Spleen (tissue), 13 donors: ENCODE measurements at regions of chr4 and their contacts with region 1.

Region 1: GRCh38 chr4:109424093-109424841 is 9.3 kb upstream of the SEC24B start:
- DNase-seq: no peak
- H3K4me3 ChIP-seq: no peak overlapping the region
- H3K27ac ChIP-seq: no peak overlapping the region
- H3K4me1 ChIP-seq: peaks cover 0 to 9% (median 3%) of the 10 kb centered on the region in 6 donors
- H3K27me3 ChIP-seq: no peaks in the 10 kb centered on the region
- CTCF ChIP-seq: no peak
- POLR2A ChIP-seq: no peak

Region 2: GRCh38 chr4:109052821-109053220 is 371.4 kb before region 1 on chr4:
- intact Hi-C with region 1: no loop called
- DNase-seq: no peak
- H3K4me3 ChIP-seq: no peak overlapping the region
- H3K27ac ChIP-seq: no peak overlapping the region
- H3K4me1 ChIP-seq: no peaks in the 10 kb centered on the region
- H3K27me3 ChIP-seq: no peaks in the 10 kb centered on the region
- CTCF ChIP-seq: no peak
- POLR2A ChIP-seq: no peak

Region 3: DNA sequence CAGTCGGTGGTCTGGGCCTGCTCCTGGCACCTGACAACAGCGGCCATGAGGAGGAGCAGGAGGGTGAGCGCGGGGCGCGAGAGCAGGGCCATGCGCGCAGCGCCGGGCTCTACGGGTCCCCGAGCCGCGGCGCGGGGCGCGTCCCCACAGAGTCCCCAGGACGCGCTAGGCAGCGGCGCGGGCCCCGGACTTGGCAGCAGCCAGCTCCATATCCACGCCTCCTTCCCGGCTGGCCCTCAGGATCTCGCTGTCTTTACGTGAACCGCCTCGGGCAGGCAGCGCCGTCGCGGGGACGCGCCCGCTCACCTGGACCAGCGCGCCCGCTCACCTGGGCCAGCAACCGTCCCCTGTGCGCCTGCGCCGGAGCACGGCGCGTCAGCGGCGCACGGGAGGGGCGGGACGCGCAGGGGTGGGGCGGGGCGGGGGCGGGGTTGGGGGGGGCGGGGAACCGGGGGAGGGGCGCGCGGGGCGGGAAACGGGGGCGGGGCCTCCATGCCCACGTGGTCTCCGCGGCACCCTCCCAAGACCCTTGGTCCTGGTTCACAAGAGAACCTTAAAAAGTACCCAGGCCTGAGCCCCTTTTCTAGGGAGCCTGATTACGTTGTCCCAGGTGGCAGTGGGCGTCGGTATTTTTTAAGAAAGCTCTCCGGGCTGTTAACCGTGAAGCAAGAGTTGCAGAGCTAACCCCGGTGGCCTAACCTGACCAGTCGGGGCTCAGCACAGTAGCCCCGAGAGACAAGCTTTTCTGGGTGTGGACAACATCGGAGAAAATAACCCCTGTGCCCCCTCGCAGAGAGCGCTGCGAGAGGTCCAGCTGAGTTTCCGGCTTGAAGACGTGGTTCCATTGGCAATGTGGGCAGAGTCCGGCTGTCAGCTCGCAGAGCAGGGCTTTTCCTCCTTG is 305.7 kb after region 1 on chr4 and contains the start of gene PLA2G12A:
- intact Hi-C with region 1: loop called (anchors 10 kb)
- DNase-seq: peak; percentile 94
- H3K4me3 ChIP-seq: peak within 1 kb of the TSS; percentile 77 to 95 (median 86)
- H3K27ac ChIP-seq: peak within 1 kb of the TSS; percentile 77 to 91 (median 86)
- H3K4me1 ChIP-seq: peaks cover 7 to 32% (median 22%) of the 10 kb centered on the region in 6 donors
- H3K27me3 ChIP-seq: no peaks in the 10 kb centered on the region
- CTCF ChIP-seq: no peak
- POLR2A ChIP-seq: peak in 2 of 3 donors; percentile 31 to 39
- total RNA-seq, gene PLA2G12A: 13.5 to 21.4 (median 17.1) TPM

Region 4: GRCh38 chr4:109977854-109978501 is 553.7 kb after region 1 on chr4:
- intact Hi-C with region 1: loop called (anchors 5 kb)
- DNase-seq: no peak
- H3K4me3 ChIP-seq: no peak overlapping the region
- H3K27ac ChIP-seq: no peak overlapping the region
- H3K4me1 ChIP-seq: peaks cover 0 to 11% (median 0%) of the 10 kb centered on the region in 6 donors
- H3K27me3 ChIP-seq: peaks cover 0 to 19% (median 0%) of the 10 kb centered on the region in 7 donors
- CTCF ChIP-seq: peak in 10 of 11 experiments; percentile 18 to 79 (median 59)
- POLR2A ChIP-seq: no peak